OCI-LY7 (cell line): ENCODE measurements at regions of chr5 and their contacts with region 1.

Region 1: GRCh38 chr5:157948738-157949410 is 89.9 kb upstream of the CLINT1 start:
- DNase-seq: peak; percentile 93
- H3K4me3 ChIP-seq: peak overlapping the region; percentile 17
- H3K27ac ChIP-seq: no peak overlapping the region
- H3K4me1 ChIP-seq: peaks cover 19% of the 10 kb centered on the region
- CTCF ChIP-seq: peak; percentile 97

Region 2: GRCh38 chr5:157761690-157762621 is 186.9 kb before region 1 on chr5:
- CTCF ChIA-PET with region 1: interaction called, 5 read pairs
- POLR2A ChIA-PET with region 1: interaction called, 3 read pairs
- intact Hi-C with region 1: loop called (anchors 1 kb)
- DNase-seq: peak; percentile 79
- H3K4me3 ChIP-seq: no peak overlapping the region
- H3K27ac ChIP-seq: no peak overlapping the region
- H3K4me1 ChIP-seq: peaks cover 11% of the 10 kb centered on the region
- CTCF ChIP-seq: peak; percentile 96

Region 3: DNA sequence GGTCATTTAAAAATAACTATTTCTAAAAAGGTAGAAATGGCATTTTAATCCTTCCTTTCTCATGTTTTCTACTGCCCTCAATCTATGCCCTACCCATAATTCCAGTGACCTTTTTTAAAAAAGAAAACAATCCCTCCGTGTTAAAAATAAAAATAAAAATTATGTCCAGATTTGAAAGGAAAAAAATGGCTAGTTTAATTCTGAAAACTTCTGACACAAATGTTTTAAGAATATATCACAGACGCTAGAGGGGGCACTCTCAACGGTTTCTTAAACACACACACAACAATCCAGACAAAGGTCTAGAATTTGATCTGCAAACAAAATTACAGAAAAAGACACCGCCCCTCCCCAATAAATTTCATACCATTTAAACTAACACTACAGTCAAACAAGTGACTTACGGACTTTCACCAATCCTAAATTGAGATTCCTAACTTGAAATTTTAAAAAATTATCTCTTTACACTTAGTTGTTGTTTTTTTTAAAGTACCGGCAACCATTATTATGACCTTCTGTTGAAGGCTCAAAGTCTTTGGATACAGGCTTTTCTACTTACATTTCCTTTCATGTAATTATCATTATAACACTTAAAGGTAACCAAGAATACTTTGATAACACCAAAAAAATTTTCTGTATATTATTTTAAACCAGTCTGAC is 128.2 kb before region 1 on chr5:
- CTCF ChIA-PET with region 1: interaction called, 5 read pairs
- POLR2A ChIA-PET with region 1: interaction called, 15 read pairs
- intact Hi-C with region 1: loop called (anchors 1 kb)
- DNase-seq: peak; percentile 83
- H3K4me3 ChIP-seq: peak overlapping the region; percentile 3
- H3K27ac ChIP-seq: peak overlapping the region; percentile 68
- H3K4me1 ChIP-seq: peaks cover 79% of the 10 kb centered on the region
- CTCF ChIP-seq: peak; percentile 97

Region 4: GRCh38 chr5:158013939-158014338 is 65.1 kb after region 1 on chr5:
- CTCF ChIA-PET with region 1: no interaction called
- POLR2A ChIA-PET with region 1: interaction called, 14 read pairs
- intact Hi-C with region 1: no loop called
- DNase-seq: peak; percentile 43
- H3K4me3 ChIP-seq: no peak overlapping the region
- H3K27ac ChIP-seq: no peak overlapping the region
- H3K4me1 ChIP-seq: no peaks in the 10 kb centered on the region
- CTCF ChIP-seq: peak; percentile 73